Caco-2 (cell line): ENCODE measurements at regions of chr1 and their contacts with region 1.

Region 1: DNA sequence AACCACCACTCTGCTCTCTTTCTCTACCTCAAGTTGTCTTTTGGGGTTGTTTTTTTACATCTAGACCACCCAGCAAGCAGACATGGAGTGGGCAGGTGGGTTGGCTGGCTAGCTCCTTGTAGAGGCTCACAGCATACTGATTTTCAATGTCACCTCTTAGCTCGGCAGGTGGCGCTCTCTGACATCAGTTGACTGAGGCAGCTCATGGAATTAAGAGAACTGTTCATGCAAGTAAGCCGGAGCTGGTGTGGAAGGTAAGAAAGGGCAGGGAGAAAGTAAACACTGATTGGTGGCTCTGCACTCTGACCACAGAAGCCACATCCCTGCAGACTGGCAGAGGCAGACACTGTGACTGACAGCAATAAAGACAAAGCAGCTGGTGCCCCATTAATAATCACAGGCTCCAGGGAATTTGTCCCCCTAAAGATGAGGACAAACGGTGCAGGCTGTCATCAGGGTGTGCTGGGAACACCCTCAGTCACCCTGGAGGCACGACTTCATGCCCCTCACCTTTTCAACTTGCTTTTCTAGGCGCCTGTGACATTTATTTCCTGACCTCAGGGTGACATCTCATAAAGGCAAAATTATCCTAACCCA is 226.8 kb downstream of the LMX1A start:
- DNase-seq: peak; percentile 81 to 84
- H3K4me3 ChIP-seq: no peak overlapping the region
- H3K4me3 Mint-ChIP-seq: no peak overlapping the region
- H3K27ac Mint-ChIP-seq: no peak overlapping the region
- H3K4me1 ChIP-seq: peaks cover 5% of the 10 kb centered on the region; the same call in 1 of the 2 replicates
- H3K4me1 Mint-ChIP-seq: peaks cover 12% of the 10 kb centered on the region
- H3K27me3 ChIP-seq: no peaks in the 10 kb centered on the region
- H3K27me3 Mint-ChIP-seq: no peaks in the 10 kb centered on the region
- CTCF ChIP-seq: peak; percentile 70 to 80

Region 2: GRCh38 chr1:165114022-165114888 is 15.4 kb before region 1 on chr1:
- CTCF ChIA-PET with region 1: interaction called, 14 read pairs
- POLR2A ChIA-PET with region 1: no interaction called
- intact Hi-C with region 1: no loop called
- DNase-seq: peak; percentile 54 to 72
- H3K4me3 ChIP-seq: no peak overlapping the region
- H3K4me3 Mint-ChIP-seq: no peak overlapping the region
- H3K27ac Mint-ChIP-seq: no peak overlapping the region
- H3K4me1 ChIP-seq: peaks cover 2% of the 10 kb centered on the region
- H3K4me1 Mint-ChIP-seq: no peaks in the 10 kb centered on the region
- H3K27me3 ChIP-seq: no peaks in the 10 kb centered on the region
- H3K27me3 Mint-ChIP-seq: peaks cover 5% of the 10 kb centered on the region
- CTCF ChIP-seq: peak; percentile 64 to 91

Region 3: GRCh38 chr1:165144757-165145397 is 15.2 kb after region 1 on chr1:
- CTCF ChIA-PET with region 1: interaction called, 7 read pairs
- POLR2A ChIA-PET with region 1: no interaction called
- intact Hi-C with region 1: loop called (anchors 1 kb)
- DNase-seq: peak; percentile 61 to 76
- H3K4me3 ChIP-seq: no peak overlapping the region
- H3K4me3 Mint-ChIP-seq: no peak overlapping the region
- H3K27ac Mint-ChIP-seq: no peak overlapping the region
- H3K4me1 ChIP-seq: peaks cover 2% of the 10 kb centered on the region; the same call in 1 of the 2 replicates
- H3K4me1 Mint-ChIP-seq: peaks cover 20% of the 10 kb centered on the region
- H3K27me3 ChIP-seq: no peaks in the 10 kb centered on the region
- H3K27me3 Mint-ChIP-seq: peaks cover 3% of the 10 kb centered on the region
- CTCF ChIP-seq: peak; percentile 76 to 80

Region 4: GRCh38 chr1:165257969-165258459 is 128.3 kb after region 1 on chr1:
- CTCF ChIA-PET with region 1: interaction called, 5 read pairs
- POLR2A ChIA-PET with region 1: no interaction called
- intact Hi-C with region 1: loop called (anchors 1 kb)
- DNase-seq: peak; percentile 63 to 70
- H3K4me3 ChIP-seq: no peak overlapping the region
- H3K4me3 Mint-ChIP-seq: no peak overlapping the region
- H3K27ac Mint-ChIP-seq: no peak overlapping the region
- H3K4me1 ChIP-seq: no peaks in the 10 kb centered on the region
- H3K4me1 Mint-ChIP-seq: peaks cover 7% of the 10 kb centered on the region
- H3K27me3 ChIP-seq: no peaks in the 10 kb centered on the region
- H3K27me3 Mint-ChIP-seq: peaks cover 8% of the 10 kb centered on the region
- CTCF ChIP-seq: peak; percentile 54 to 69

Region 5: GRCh38 chr1:165284454-165284853 is 154.8 kb after region 1 on chr1:
- CTCF ChIA-PET with region 1: interaction called, 12 read pairs
- POLR2A ChIA-PET with region 1: no interaction called
- intact Hi-C with region 1: no loop called
- DNase-seq: no peak
- H3K4me3 ChIP-seq: no peak overlapping the region
- H3K4me3 Mint-ChIP-seq: no peak overlapping the region
- H3K27ac Mint-ChIP-seq: no peak overlapping the region
- H3K4me1 ChIP-seq: no peaks in the 10 kb centered on the region
- H3K4me1 Mint-ChIP-seq: peaks cover 7% of the 10 kb centered on the region
- H3K27me3 ChIP-seq: no peaks in the 10 kb centered on the region; the same call in 1 of the 2 replicates
- H3K27me3 Mint-ChIP-seq: peaks cover 3% of the 10 kb centered on the region
- CTCF ChIP-seq: no peak

Region 6: GRCh38 chr1:165367375-165367993 is 237.8 kb after region 1 on chr1:
- CTCF ChIA-PET with region 1: interaction called, 10 read pairs
- POLR2A ChIA-PET with region 1: no interaction called
- intact Hi-C with region 1: loop called (anchors 1 kb)
- DNase-seq: peak; percentile 70 to 80
- H3K4me3 ChIP-seq: no peak overlapping the region
- H3K4me3 Mint-ChIP-seq: no peak overlapping the region
- H3K27ac Mint-ChIP-seq: no peak overlapping the region
- H3K4me1 ChIP-seq: no peaks in the 10 kb centered on the region
- H3K4me1 Mint-ChIP-seq: no peaks in the 10 kb centered on the region
- H3K27me3 ChIP-seq: no peaks in the 10 kb centered on the region
- H3K27me3 Mint-ChIP-seq: peaks cover 4% of the 10 kb centered on the region
- CTCF ChIP-seq: peak; percentile 84 to 95